ENCODE measurements at regions of chr19 and their contacts with region 1.

Region 1: GRCh38 chr19:39846176-39846677 is at the start of gene FBL:
- DNase-seq: peak; percentile 96 to 99 (median 98)
- ATAC-seq: peak; percentile 93
- H3K4me3 ChIP-seq: peak within 1 kb of the TSS; percentile 94
- H3K4me3 Mint-ChIP-seq: peak within 1 kb of the TSS; percentile 85
- H3K27ac ChIP-seq: peak within 1 kb of the TSS; percentile 87 to 89
- H3K27ac Mint-ChIP-seq: peak within 1 kb of the TSS; percentile 92
- H3K4me1 ChIP-seq: peaks cover 44% of the 10 kb centered on the region
- H3K4me1 Mint-ChIP-seq: peaks cover 55% of the 10 kb centered on the region
- H3K27me3 ChIP-seq: no peaks in the 10 kb centered on the region
- H3K27me3 Mint-ChIP-seq: no peaks in the 10 kb centered on the region
- CTCF ChIP-seq: no peak
- total RNA-seq, gene FBL: 267 to 287 TPM

Region 2: DNA sequence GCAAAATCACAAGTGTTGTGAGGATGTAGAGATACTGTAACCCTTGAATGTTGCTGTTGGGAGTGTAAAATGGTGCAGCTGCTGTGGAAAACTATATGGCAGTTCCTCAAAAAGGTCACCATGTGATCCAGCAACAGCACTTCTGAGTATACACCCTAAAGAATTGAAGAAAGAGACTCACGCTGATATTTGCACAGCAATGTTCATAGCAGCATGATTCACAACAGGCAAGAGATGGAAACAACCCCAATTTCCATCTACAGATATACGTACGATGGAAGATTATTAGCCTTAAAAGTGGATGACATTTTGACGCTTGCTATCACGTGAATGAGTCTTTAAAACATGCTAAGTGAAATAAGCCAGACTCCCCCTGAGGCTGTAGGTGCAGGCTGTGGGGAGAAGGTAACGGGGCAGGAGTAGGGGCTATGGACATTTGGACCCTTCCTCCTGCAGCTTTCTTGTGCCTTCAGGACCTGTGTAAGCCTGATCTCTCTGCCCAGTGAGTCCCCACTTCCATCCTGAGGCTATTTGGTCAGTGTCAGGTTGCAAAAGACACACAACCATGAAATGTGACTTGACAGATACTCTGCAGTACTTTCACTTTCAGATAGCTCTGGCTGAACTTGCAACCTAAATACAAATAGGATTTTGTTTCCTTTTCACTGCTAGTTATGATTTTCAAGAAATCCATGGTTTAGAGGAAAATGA is 288.6 kb before region 1 on chr19:
- CTCF ChIA-PET with region 1: no interaction called
- POLR2A ChIA-PET with region 1: no interaction called
- intact Hi-C with region 1: loop called in 1 of 2 experiments (anchors 10 kb)
- DNase-seq: peak in 1 of 14 experiments; percentile 53
- ATAC-seq: peak; percentile 39
- H3K4me3 ChIP-seq: peak overlapping the region; percentile 36
- H3K4me3 Mint-ChIP-seq: peak overlapping the region; percentile 72
- H3K27ac ChIP-seq: peak overlapping the region in 1 of 2 donors; percentile 43
- H3K27ac Mint-ChIP-seq: peak overlapping the region; percentile 80
- H3K4me1 ChIP-seq: peaks cover 14% of the 10 kb centered on the region
- H3K4me1 Mint-ChIP-seq: peaks cover 14% of the 10 kb centered on the region
- H3K27me3 ChIP-seq: no peaks in the 10 kb centered on the region
- H3K27me3 Mint-ChIP-seq: no peaks in the 10 kb centered on the region
- CTCF ChIP-seq: no peak

Region 3: GRCh38 chr19:39765091-39766076 is 80.8 kb before region 1 on chr19:
- CTCF ChIA-PET with region 1: interaction called, 3 read pairs
- POLR2A ChIA-PET with region 1: no interaction called
- intact Hi-C with region 1: loop called in 1 of 2 experiments (anchors 2 kb)
- DNase-seq: peak in 12 of 14 experiments; percentile 6 to 71 (median 26)
- ATAC-seq: no peak
- H3K4me3 ChIP-seq: no peak overlapping the region
- H3K4me3 Mint-ChIP-seq: no peak overlapping the region
- H3K27ac ChIP-seq: no peak overlapping the region
- H3K27ac Mint-ChIP-seq: no peak overlapping the region
- H3K4me1 ChIP-seq: peaks cover 4% of the 10 kb centered on the region
- H3K4me1 Mint-ChIP-seq: no peaks in the 10 kb centered on the region
- H3K27me3 ChIP-seq: peaks cover 0 to 3% of the 10 kb centered on the region in 2 experiments
- H3K27me3 Mint-ChIP-seq: peaks cover 12% of the 10 kb centered on the region
- CTCF ChIP-seq: peak; percentile 81

Region 4: DNA sequence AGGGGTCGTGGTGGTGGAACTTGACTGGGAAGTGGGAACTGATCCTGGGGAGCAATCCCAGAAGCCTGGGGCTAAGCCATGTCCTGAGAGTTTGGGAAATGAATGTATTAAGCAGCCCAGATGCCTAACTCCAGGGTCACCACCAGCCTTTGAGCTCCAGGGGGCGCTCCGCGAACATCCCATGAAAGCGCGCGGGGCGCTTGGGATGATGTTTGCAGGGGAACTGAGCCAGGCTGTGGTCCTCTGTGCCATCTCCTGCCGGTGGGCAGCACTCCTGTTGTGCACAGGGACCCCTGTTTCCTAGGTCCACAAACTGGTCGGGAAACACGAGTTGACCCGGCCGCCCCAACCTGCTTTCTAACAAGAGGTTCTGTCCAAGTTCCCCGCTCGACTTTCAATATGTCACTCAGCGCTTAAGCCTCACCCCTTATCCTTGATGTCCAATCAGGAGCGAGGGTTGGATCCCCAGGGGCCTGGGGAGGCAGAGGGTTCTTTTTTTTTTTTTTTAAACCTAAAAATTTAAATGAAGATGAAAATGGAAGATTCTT is 53.2 kb before region 1 on chr19:
- CTCF ChIA-PET with region 1: interaction called, 75 read pairs
- POLR2A ChIA-PET with region 1: interaction called, 4 read pairs
- intact Hi-C with region 1: loop called (anchors 1 kb)
- DNase-seq: peak; percentile 52 to 83 (median 64)
- ATAC-seq: peak; percentile 94
- H3K4me3 ChIP-seq: peak overlapping the region; percentile 58
- H3K4me3 Mint-ChIP-seq: peak overlapping the region; percentile 81
- H3K27ac ChIP-seq: no peak overlapping the region
- H3K27ac Mint-ChIP-seq: no peak overlapping the region
- H3K4me1 ChIP-seq: peaks cover 7% of the 10 kb centered on the region
- H3K4me1 Mint-ChIP-seq: no peaks in the 10 kb centered on the region
- H3K27me3 ChIP-seq: no peaks in the 10 kb centered on the region
- H3K27me3 Mint-ChIP-seq: peaks cover 11% of the 10 kb centered on the region
- CTCF ChIP-seq: peak; percentile 90

Region 5: GRCh38 chr19:39833464-39834286 is 12.6 kb before region 1 on chr19 and contains the start of gene DYRK1B:
- CTCF ChIA-PET with region 1: interaction called, 8 read pairs
- POLR2A ChIA-PET with region 1: interaction called, 44 read pairs
- intact Hi-C with region 1: loop called (anchors 1 kb)
- DNase-seq: peak; percentile 96 to 100 (median 98)
- ATAC-seq: peak; percentile 86
- H3K4me3 ChIP-seq: peak within 1 kb of the TSS; percentile 88
- H3K4me3 Mint-ChIP-seq: peak within 1 kb of the TSS; percentile 81
- H3K27ac ChIP-seq: peak within 1 kb of the TSS; percentile 96 to 99
- H3K27ac Mint-ChIP-seq: peak within 1 kb of the TSS; percentile 68
- H3K4me1 ChIP-seq: peaks cover 29% of the 10 kb centered on the region
- H3K4me1 Mint-ChIP-seq: peaks cover 20% of the 10 kb centered on the region
- H3K27me3 ChIP-seq: no peaks in the 10 kb centered on the region
- H3K27me3 Mint-ChIP-seq: no peaks in the 10 kb centered on the region
- CTCF ChIP-seq: no peak
- total RNA-seq, gene DYRK1B: 18.9 to 19.4 TPM

Region 6: GRCh38 chr19:39889872-39890545 is 43.8 kb after region 1 on chr19:
- CTCF ChIA-PET with region 1: no interaction called
- POLR2A ChIA-PET with region 1: no interaction called
- intact Hi-C with region 1: no loop called
- DNase-seq: no peak
- ATAC-seq: no peak
- H3K4me3 ChIP-seq: no peak overlapping the region
- H3K4me3 Mint-ChIP-seq: no peak overlapping the region
- H3K27ac ChIP-seq: no peak overlapping the region
- H3K27ac Mint-ChIP-seq: no peak overlapping the region
- H3K4me1 ChIP-seq: peaks cover 4% of the 10 kb centered on the region
- H3K4me1 Mint-ChIP-seq: no peaks in the 10 kb centered on the region
- H3K27me3 ChIP-seq: no peaks in the 10 kb centered on the region
- H3K27me3 Mint-ChIP-seq: no peaks in the 10 kb centered on the region
- CTCF ChIP-seq: no peak